HepG2 (cell line): ENCODE measurements at regions of chr18 and their contacts with region 1.

Region 1: DNA sequence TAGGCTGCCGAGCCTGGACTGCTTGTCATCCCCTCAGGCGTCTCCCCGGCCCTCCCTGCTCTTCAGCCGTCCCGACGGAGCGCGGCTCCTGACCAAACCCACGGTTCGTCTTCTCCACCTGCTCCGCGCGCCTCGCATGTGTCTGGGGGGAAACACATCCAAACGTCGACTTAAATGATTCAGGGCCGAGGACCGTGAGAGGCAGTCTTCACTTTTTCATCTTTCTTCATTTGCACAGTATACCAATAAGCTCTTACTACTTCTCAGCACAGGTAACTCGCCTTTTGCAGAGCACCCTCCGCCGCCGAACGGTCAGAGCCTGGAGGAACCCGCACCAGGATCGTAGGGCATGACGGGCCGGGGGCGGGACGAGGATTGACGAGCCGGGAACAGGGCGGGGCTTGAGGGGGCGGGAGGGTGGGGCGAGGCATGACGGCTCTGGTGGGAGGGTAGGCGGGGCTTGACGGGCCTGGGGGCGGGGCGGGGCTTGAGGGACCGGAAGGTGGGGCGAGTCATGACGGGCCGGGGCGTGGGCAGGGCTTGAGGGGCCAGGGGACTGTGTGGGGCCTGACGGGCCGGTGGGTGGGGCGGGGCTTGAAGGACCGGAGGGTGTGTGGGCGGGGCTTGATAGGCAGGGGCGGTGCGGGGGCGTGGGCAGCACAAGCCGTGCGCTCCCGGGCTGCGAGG is at the start of gene SEH1L:
- DNase-seq: peak; percentile 87
- ATAC-seq: peak; percentile 91
- H3K4me3 ChIP-seq: peak within 1 kb of the TSS; percentile 73 to 84 (median 81)
- H3K27ac ChIP-seq: peak within 1 kb of the TSS; percentile 99
- H3K4me1 ChIP-seq: peaks cover 50% of the 10 kb centered on the region
- H3K27me3 ChIP-seq: no peaks in the 10 kb centered on the region
- CTCF ChIP-seq: no peak
- EP300 ChIP-seq: no peak
- POLR2A ChIP-seq: no peak; a peak in 2 of 4 replicates
- RAD21 ChIP-seq: 0 out of 2 replicates have a peak, but pooled peaks have one; percentile 10
- total RNA-seq, gene SEH1L: 59.6 and 96.2 TPM in 2 replicates

Region 2: DNA sequence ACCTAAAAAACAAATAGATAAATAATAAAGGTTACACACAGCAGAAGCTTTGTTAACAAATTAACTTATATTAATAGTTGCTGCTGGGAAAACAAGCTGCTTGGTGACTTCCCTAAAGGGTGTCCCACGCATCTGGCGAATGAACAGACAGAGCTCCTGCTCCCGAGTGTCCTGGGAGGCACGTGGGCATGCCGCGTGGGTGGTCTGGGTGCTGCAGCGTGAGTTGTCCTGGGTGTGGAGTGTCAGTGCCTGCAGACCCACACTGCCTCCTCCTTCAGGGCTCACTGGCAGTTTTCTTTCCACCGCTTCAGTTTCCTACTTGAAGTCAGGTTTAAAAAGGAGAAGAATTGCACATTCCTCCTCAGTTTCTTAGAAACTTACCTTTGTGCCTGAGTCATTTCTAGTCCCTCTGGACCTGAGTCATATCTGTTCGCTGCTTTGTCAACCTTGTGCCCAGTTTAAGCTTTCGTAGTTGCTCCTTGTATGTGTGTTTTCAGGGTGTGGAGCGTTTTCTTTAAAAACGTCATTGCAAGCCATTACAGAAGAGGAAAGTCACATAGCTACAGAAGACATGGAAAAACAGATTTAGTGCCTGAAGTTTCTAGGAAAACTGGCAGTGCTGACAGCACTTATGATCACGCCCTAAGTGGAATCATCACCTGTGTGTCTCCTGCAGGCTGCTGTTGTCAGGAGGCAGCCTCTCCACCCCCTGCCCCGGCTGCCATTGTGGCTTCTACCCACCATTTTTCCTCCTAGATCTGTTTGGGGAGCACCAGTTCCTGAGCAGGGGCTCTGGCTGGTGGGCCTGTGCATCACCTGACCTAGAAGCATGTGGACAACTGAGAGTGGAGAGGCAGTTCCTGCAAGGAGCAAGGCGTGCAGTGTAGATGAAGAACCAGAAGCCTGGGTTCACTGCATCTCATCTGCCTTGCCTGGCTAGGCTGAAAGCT is 941.7 kb before region 1 on chr18:
- CTCF ChIA-PET with region 1: no interaction called
- POLR2A ChIA-PET with region 1: no interaction called
- in situ Hi-C with region 1: no loop called
- intact Hi-C with region 1: no loop called
- DNase-seq: no peak
- ATAC-seq: no peak
- H3K4me3 ChIP-seq: no peak overlapping the region
- H3K27ac ChIP-seq: peak overlapping the region; percentile 32
- H3K4me1 ChIP-seq: peaks cover 40% of the 10 kb centered on the region
- H3K27me3 ChIP-seq: no peaks in the 10 kb centered on the region
- CTCF ChIP-seq: no peak
- EP300 ChIP-seq: no peak
- POLR2A ChIP-seq: no peak
- RAD21 ChIP-seq: no peak

Region 3: DNA sequence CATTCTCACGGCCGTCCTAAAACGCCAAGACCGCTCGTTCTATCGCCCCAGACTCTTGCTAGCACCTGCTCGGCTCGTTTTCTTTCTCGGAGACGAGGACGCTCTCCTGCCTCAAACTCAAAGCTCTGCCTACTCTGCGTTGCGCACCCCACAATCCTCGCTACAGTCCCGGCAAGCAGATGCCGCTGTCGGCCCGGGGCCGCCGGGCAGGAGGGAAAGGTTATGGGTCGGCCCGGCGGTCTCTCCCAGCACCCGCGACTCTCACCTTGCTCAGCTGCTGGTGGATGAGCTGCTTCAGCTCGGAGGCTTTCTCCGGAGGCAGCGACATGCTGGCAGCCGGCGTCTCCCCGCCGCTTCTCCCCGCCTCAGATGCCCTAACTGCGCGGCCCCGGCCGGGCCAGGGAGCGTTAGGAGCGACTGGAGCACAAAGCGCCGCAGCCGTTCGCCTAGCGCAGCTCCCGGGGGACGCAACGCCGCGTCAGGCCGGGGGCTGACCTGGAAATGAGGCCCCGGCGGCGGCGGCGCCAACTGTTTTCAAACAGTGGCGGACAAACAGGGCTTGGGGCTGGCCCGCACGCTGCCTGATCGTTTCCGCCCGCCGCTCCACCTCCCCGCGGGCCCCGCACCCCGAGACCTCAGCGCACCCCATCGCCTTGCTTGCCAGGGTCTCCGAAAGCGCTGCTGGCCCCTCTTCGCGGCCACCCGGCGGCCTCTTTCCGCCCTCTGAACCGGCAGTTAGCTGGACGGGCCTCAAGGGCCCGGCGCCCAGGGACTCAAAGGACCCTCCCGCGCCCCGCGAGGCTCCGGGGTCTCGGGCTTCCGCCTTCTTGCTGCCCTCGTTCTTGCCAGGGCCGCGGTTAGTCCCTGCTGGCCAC is 245.0 kb before region 1 on chr18 and contains the starts of genes CEP76 and PSMG2:
- CTCF ChIA-PET with region 1: no interaction called
- POLR2A ChIA-PET with region 1: interaction called, 10 read pairs
- in situ Hi-C with region 1: no loop called
- intact Hi-C with region 1: no loop called
- DNase-seq: peak; percentile 81
- ATAC-seq: peak; percentile 96
- H3K4me3 ChIP-seq: peak within 1 kb of the TSS; percentile 91 to 99 (median 93)
- H3K27ac ChIP-seq: peak within 1 kb of the TSS; percentile 89
- H3K4me1 ChIP-seq: peaks cover 57% of the 10 kb centered on the region
- H3K27me3 ChIP-seq: no peaks in the 10 kb centered on the region; a peak in 2 of 5 replicates
- CTCF ChIP-seq: 0 out of 2 replicates have a peak, but pooled peaks have one; percentile 2
- EP300 ChIP-seq: peak in 1 of 2 experiments; percentile 13; a peak in 1 of 4 replicates
- POLR2A ChIP-seq: peak; percentile 82 to 91
- RAD21 ChIP-seq: peak; percentile 43; the same call in 1 of the 2 replicates
- total RNA-seq, gene CEP76: 15.1 and 19.4 TPM in 2 replicates
- total RNA-seq, gene PSMG2: 94.8 and 133 TPM in 2 replicates

Region 4: GRCh38 chr18:12990967-12991838 is 43.7 kb after region 1 on chr18 and contains the start of gene CEP192:
- CTCF ChIA-PET with region 1: no interaction called
- POLR2A ChIA-PET with region 1: interaction called, 11 read pairs
- in situ Hi-C with region 1: no loop called
- intact Hi-C with region 1: loop called (anchors 5 kb)
- DNase-seq: peak; percentile 96
- ATAC-seq: peak; percentile 93
- H3K4me3 ChIP-seq: peak within 1 kb of the TSS; percentile 87 to 96 (median 91)
- H3K27ac ChIP-seq: peak within 1 kb of the TSS; percentile 86
- H3K4me1 ChIP-seq: peaks cover 49% of the 10 kb centered on the region
- H3K27me3 ChIP-seq: no peaks in the 10 kb centered on the region; a peak in 2 of 5 replicates
- CTCF ChIP-seq: peak; percentile 68
- EP300 ChIP-seq: no peak
- POLR2A ChIP-seq: peak; percentile 85 to 96
- RAD21 ChIP-seq: peak; percentile 59; the same call in 1 of the 2 replicates
- total RNA-seq, gene CEP192: 24.7 and 33.6 TPM in 2 replicates